ENCODE measurements at regions of chr14 and their contacts with region 1.

Region 1: DNA sequence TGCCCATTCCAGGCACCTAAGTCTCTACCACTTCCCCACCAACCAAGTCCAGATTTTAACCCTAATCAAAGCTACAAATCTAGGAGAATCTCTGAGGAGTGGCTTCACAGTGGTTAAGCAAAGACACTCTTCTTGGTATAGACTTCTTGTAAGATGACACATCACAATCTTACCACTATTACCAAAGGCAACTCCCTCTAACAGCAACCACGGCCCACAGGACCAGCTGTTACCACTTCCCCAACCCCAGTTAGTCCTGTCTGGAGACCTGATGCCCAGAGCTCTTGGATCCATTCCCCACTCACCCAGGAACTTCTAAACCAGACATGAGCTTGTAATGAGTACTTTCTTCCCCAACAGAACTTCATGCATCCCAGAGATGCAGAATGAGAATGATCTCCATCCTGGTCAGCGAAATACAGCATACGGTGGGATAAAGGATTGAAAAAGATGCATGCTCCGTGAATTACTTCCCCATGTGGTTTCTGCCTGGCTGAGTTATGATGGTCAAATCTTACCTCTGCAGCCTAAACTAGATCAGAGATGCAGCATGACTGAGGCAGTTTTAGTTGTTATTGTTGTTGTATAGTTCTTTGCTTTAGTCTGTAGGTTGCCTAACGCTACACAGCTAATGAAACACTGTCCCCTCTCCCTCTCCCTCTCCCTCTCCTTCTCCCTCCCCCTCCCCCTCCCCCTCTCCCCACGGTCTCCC is 87.7 kb upstream of the FOXN3 start:
- DNase-seq: peak; percentile 66
- ATAC-seq: peak; percentile 25
- H3K4me3 Mint-ChIP-seq: no peak overlapping the region
- H3K27ac Mint-ChIP-seq: peak overlapping the region; percentile 11
- H3K4me1 Mint-ChIP-seq: peaks cover 55% of the 10 kb centered on the region
- H3K27me3 Mint-ChIP-seq: no peaks in the 10 kb centered on the region
- CTCF ChIP-seq: no peak

Region 2: DNA sequence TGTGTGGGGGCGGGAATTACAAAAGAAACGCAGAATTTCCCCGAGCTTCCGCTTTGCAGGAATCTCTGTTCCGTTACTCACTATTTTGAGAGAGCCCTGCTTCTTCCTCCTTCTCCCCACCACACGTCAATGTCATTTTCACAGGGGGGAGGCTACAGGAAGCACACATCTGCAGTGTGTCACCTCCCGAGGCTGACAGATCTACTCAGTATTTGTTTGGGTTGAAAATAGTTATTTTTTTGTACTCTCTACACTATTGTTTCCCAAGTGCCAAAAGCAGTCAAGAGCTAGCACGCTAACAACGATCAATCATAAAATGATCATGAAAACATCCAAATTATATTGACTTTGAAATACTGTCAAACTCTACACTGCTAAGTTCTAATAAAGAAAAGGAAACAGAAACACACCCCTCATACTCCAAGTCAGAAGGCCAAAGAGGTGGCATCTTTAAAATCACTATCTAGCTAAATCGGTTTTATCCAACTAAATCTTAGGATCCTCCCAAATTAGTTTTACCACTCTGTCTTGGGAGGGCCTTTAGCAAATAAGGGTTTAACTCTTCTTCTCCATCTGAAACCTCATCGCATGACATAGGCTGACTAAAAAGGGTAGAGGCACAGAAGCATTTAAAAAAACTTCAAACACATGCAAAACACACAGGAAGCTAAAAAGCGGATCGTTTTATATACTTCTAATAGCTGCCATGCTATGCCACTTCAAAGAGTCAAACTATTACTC is 139.5 kb before region 1 on chr14:
- CTCF ChIA-PET with region 1: no interaction called
- POLR2A ChIA-PET with region 1: no interaction called
- intact Hi-C with region 1: no loop called
- DNase-seq: peak; percentile 73
- ATAC-seq: peak; percentile 93
- H3K4me3 Mint-ChIP-seq: peak overlapping the region; percentile 77
- H3K27ac Mint-ChIP-seq: peak overlapping the region; percentile 97
- H3K4me1 Mint-ChIP-seq: peaks cover 61% of the 10 kb centered on the region
- H3K27me3 Mint-ChIP-seq: no peaks in the 10 kb centered on the region
- CTCF ChIP-seq: no peak

Region 3: GRCh38 chr14:89430391-89431236 is 74.1 kb before region 1 on chr14:
- CTCF ChIA-PET with region 1: interaction called, 5 read pairs
- POLR2A ChIA-PET with region 1: no interaction called
- intact Hi-C with region 1: loop called (anchors 5 kb)
- DNase-seq: peak; percentile 71
- ATAC-seq: peak; percentile 79
- H3K4me3 Mint-ChIP-seq: peak overlapping the region; percentile 79
- H3K27ac Mint-ChIP-seq: peak overlapping the region; percentile 100
- H3K4me1 Mint-ChIP-seq: peaks cover 71% of the 10 kb centered on the region
- H3K27me3 Mint-ChIP-seq: no peaks in the 10 kb centered on the region
- CTCF ChIP-seq: no peak

Region 4: GRCh38 chr14:89524990-89525667 is 20.4 kb after region 1 on chr14:
- CTCF ChIA-PET with region 1: no interaction called
- POLR2A ChIA-PET with region 1: no interaction called
- intact Hi-C with region 1: no loop called
- DNase-seq: peak; percentile 22
- ATAC-seq: no peak
- H3K4me3 Mint-ChIP-seq: no peak overlapping the region
- H3K27ac Mint-ChIP-seq: peak overlapping the region; percentile 35
- H3K4me1 Mint-ChIP-seq: peaks cover 27% of the 10 kb centered on the region
- H3K27me3 Mint-ChIP-seq: no peaks in the 10 kb centered on the region
- CTCF ChIP-seq: no peak

Measured in activated CD8-positive, alpha-beta T cell treated with anti-CD3 and anti-CD28 coated beads for 36 hours (primary cell).